Gastrocnemius medialis (tissue), 4 donors: ENCODE measurements at regions of chr1 and their contacts with region 1.

Region 1: DNA sequence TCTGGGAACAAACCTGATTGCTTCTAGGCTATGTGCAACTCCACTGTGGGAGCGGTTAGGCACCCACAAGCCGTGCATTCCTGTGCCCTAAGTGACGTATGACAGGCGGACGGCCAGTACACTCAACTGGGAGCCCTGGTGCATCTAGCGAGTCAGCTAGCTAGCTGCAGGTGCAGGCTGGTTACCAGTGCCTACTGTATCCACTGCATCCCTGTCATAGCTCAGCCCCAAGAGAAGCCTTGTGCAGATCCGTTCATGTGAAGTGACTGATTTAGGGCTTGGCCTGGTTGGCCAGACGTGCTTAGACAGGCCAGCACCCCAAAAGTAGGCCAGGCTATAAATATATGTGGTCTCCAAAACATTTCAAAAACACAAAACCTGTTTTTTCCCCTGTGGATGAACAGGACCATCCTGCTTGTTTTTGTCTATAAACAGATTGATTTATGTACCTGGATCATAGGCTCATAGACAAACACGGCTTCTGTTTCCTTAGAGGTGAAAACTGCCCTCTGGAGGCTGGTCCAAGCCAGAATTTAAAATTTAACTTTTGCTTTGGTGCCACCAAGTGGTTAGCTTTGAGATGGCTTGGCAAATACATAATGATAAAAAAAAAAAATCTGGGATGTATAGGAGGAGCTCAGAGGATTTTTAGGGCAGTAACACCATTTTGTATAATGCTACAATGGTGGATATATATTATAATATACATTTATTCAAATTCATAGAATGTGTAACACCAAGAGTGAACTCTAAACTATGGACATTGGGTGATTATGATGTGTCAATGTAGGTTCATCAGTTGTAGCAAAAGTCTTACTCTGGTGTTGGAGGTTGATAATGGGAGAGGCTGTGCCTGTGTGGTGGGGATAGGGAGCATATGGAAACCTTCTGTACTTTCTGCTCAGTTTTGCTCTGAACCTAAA is 68.5 kb downstream of the GIPC2 start:
- DNase-seq: peak; percentile 19 to 47
- ATAC-seq: peak; percentile 96 to 98
- H3K4me3 ChIP-seq: peak overlapping the region in 1 of 4 donors; percentile 9
- H3K27ac ChIP-seq: peak overlapping the region; percentile 54 to 82 (median 67)
- H3K4me1 ChIP-seq: peaks cover 8 to 11% of the 10 kb centered on the region in 2 donors
- H3K27me3 ChIP-seq: no peaks in the 10 kb centered on the region
- CTCF ChIP-seq: peak; percentile 75 to 90 (median 86)
- POLR2A ChIP-seq: no peak

Region 2: DNA sequence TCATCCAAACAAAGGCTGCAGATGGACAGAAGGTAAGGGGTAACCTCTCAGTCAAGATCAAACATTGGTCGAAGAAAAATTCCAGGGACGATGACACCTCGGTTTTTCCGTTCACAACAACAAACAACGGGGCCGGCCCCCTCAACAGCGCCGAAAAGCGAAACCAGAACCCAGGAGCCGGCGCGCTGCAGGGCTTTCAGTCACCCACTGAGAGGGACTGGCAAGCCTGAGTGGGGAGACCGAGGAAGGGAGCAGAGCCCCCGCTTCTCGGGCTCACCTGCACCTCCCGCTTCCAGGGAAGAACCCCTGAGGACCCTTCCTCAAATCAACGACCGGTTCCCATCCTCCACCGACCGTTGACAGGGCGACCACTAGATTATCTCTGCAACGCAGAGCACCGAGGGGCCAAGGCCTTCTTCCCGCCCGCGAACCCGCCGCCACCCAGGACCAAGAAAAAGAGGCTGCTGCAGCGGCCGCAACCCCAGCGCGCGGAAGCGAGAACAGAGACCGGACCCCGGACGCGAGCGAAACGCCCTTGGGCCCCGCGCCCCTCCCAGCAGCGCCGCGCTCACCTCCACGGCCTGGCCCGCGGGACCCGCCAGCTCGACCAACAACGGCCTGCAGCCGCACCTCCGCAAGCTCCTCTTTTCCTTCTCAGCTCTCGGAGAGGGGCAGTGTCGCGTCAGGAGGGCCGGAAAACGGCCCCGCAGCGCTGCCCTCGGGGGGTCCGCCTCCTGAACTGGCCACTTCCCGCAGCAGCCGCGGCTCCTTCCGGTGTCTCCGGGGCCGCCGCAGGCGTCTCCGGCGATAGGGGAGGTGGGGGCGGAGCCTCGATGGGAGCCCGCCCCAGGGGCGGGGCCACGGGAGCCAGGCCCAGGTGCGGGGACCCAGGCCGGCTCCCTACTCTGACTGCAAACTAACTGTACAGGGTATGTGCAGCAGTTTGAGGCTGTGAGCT is 354.9 kb before region 1 on chr1 and contains the start of gene USP33:
- in situ Hi-C with region 1: loop called in 1 of 4 experiments (anchors 25 kb)
- intact Hi-C with region 1: no loop called
- DNase-seq: peak; percentile 78 to 84
- ATAC-seq: peak; percentile 88 to 93
- H3K4me3 ChIP-seq: peak within 1 kb of the TSS; percentile 84 to 100 (median 94)
- H3K27ac ChIP-seq: peak within 1 kb of the TSS; percentile 82 to 97 (median 88)
- H3K4me1 ChIP-seq: peaks cover 29 to 36% of the 10 kb centered on the region in 2 donors
- H3K27me3 ChIP-seq: no peaks in the 10 kb centered on the region
- CTCF ChIP-seq: no peak
- POLR2A ChIP-seq: peak; percentile 78 to 85
- total RNA-seq, gene USP33: 31.1 to 51.8 (median 34.6) TPM

Region 3: DNA sequence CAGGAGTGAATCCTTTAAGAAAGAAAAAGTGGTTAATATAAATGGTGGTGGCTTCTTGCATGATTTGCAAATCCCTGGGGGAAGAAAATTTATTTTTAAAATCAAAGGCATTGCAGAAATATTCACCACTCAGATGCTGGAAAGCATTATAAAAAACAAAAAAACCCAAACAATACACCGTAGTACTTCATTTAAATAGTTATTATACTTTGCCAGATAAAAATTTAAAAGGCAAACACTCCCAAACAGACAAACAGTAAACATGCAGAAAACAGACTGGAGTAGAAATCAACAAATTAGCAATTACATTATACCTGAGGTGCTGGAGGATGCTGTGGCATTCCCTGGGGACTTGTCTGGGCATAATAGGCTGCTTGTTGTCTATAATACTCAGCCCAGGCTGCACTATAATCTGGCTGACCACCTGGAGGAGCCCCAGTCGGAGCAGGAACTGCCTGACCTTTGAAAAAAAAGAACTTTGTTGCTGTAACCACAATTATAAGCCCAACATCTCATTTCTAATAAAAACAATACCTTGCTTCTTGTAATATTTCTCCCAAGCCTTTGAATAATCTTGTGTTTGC is 165.4 kb before region 1 on chr1:
- in situ Hi-C with region 1: loop called in 1 of 4 experiments (anchors 25 kb)
- intact Hi-C with region 1: loop called (anchors 5 kb)
- DNase-seq: no peak
- ATAC-seq: peak in 1 of 2 donors; percentile 37
- H3K4me3 ChIP-seq: no peak overlapping the region
- H3K27ac ChIP-seq: peak overlapping the region in 2 of 4 donors; percentile 6 to 16
- H3K4me1 ChIP-seq: peaks cover 0 to 5% of the 10 kb centered on the region in 2 donors
- H3K27me3 ChIP-seq: no peaks in the 10 kb centered on the region
- CTCF ChIP-seq: peak in 1 of 5 experiments; percentile 19
- POLR2A ChIP-seq: no peak

Region 4: GRCh38 chr1:77986810-77987209 is 127.5 kb before region 1 on chr1:
- in situ Hi-C with region 1: loop called in 2 of 4 experiments (anchors 10 to 25 kb)
- intact Hi-C with region 1: no loop called
- DNase-seq: no peak
- ATAC-seq: no peak
- H3K4me3 ChIP-seq: no peak overlapping the region
- H3K27ac ChIP-seq: no peak overlapping the region
- H3K4me1 ChIP-seq: peaks cover 35 to 40% of the 10 kb centered on the region in 2 donors
- H3K27me3 ChIP-seq: no peaks in the 10 kb centered on the region
- CTCF ChIP-seq: no peak
- POLR2A ChIP-seq: no peak

Region 5: GRCh38 chr1:78045926-78046778 is 68.1 kb before region 1 on chr1 and contains the start of gene GIPC2:
- in situ Hi-C with region 1: no loop called
- intact Hi-C with region 1: loop called (anchors 2 kb)
- DNase-seq: peak in 1 of 2 donors; percentile 23
- ATAC-seq: peak; percentile 51 to 75
- H3K4me3 ChIP-seq: peak within 1 kb of the TSS; percentile 66 to 87 (median 76)
- H3K27ac ChIP-seq: peak within 1 kb of the TSS; percentile 70 to 84 (median 78)
- H3K4me1 ChIP-seq: peaks cover 17 to 34% of the 10 kb centered on the region in 2 donors
- H3K27me3 ChIP-seq: no peaks in the 10 kb centered on the region
- CTCF ChIP-seq: no peak
- POLR2A ChIP-seq: peak in 1 of 2 donors; percentile 5
- total RNA-seq, gene GIPC2: 0.67 to 1.5 (median 1.3) TPM